Colonic mucosa (tissue), 4 donors: ENCODE measurements at regions of chr14 and their contacts with region 1.

Region 1: GRCh38 chr14:67599698-67600561 is at the start of gene PIGH:
- DNase-seq: peak; percentile 94
- H3K4me3 ChIP-seq: peak within 1 kb of the TSS; percentile 82
- H3K27ac ChIP-seq: peak within 1 kb of the TSS; percentile 88
- H3K4me1 ChIP-seq: peaks cover 6% of the 10 kb centered on the region
- H3K27me3 ChIP-seq: no peaks in the 10 kb centered on the region
- CTCF ChIP-seq: peak; percentile 39
- total RNA-seq, gene PIGH: 16.3 to 17.1 TPM

Region 2: DNA sequence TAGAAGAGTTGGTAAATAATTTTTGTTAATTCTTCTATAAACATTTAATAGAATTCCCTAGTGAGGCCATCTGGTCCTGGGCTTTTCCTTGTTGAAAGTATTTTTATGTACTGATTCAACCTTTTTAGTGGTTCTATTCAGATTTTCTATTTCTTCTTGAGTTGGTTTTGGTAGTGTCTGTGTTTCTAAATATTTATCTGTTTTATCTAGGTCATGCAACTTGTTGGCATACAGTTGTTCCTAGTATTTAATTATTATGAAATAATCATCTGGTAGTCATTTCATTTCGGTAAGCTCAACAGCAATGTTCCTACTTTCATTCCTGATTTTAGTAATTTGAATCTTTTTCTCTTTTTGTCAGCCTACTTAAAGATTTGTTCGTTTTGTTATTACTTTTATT is 644.8 kb before region 1 on chr14:
- intact Hi-C with region 1: no loop called
- DNase-seq: no peak
- H3K4me3 ChIP-seq: no peak overlapping the region
- H3K27ac ChIP-seq: no peak overlapping the region
- H3K4me1 ChIP-seq: no peaks in the 10 kb centered on the region
- H3K27me3 ChIP-seq: no peaks in the 10 kb centered on the region
- CTCF ChIP-seq: no peak

Region 3: DNA sequence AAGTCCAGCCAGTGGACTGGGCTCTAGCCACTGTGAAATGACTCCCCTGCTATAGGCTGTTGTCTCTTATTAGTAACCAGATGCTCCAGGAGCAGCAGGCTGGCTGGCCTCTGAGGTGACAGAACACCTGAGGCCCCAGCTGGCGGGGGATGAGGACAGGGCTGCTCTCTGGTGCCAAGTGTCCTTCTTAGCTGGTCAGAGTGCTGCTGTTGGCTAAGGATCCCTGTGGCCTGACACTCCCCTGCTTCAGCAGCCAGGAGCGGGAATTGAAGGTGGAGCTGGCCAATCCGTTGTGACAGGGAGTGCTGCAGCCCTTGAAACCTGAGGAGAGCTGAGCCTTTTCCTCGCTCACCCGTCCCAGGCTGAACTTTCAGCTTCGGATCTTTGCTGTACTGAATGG is 142.1 kb before region 1 on chr14:
- intact Hi-C with region 1: no loop called
- DNase-seq: no peak
- H3K4me3 ChIP-seq: no peak overlapping the region
- H3K27ac ChIP-seq: no peak overlapping the region
- H3K4me1 ChIP-seq: no peaks in the 10 kb centered on the region
- H3K27me3 ChIP-seq: no peaks in the 10 kb centered on the region
- CTCF ChIP-seq: no peak

Region 4: GRCh38 chr14:67680121-67680602 is 80.2 kb after region 1 on chr14:
- intact Hi-C with region 1: loop called (anchors 5 kb)
- DNase-seq: no peak
- H3K4me3 ChIP-seq: no peak overlapping the region
- H3K27ac ChIP-seq: no peak overlapping the region
- H3K4me1 ChIP-seq: no peaks in the 10 kb centered on the region
- H3K27me3 ChIP-seq: no peaks in the 10 kb centered on the region
- CTCF ChIP-seq: no peak